Ascending aorta (tissue), 2 donors: ENCODE measurements at regions of chr13 and their contacts with region 1.

Region 1: GRCh38 chr13:80363890-80364503 is 23.1 kb upstream of the SPRY2 start:
- DNase-seq: no peak
- H3K4me3 ChIP-seq: peak overlapping the region; percentile 28 to 29
- H3K27ac ChIP-seq: no peak overlapping the region
- H3K4me1 ChIP-seq: peaks cover 0 to 12% of the 10 kb centered on the region in 2 donors
- H3K27me3 ChIP-seq: no peaks in the 10 kb centered on the region
- CTCF ChIP-seq: peak in 2 of 3 experiments; percentile 71 to 76

Region 2: GRCh38 chr13:79679334-79679733 is 684.7 kb before region 1 on chr13:
- intact Hi-C with region 1: loop called (anchors 10 kb)
- DNase-seq: peak in 1 of 2 donors; percentile 79
- H3K4me3 ChIP-seq: no peak overlapping the region
- H3K27ac ChIP-seq: no peak overlapping the region
- H3K4me1 ChIP-seq: no peaks in the 10 kb centered on the region
- H3K27me3 ChIP-seq: no peaks in the 10 kb centered on the region
- CTCF ChIP-seq: peak; percentile 65 to 74 (median 67)

Region 3: DNA sequence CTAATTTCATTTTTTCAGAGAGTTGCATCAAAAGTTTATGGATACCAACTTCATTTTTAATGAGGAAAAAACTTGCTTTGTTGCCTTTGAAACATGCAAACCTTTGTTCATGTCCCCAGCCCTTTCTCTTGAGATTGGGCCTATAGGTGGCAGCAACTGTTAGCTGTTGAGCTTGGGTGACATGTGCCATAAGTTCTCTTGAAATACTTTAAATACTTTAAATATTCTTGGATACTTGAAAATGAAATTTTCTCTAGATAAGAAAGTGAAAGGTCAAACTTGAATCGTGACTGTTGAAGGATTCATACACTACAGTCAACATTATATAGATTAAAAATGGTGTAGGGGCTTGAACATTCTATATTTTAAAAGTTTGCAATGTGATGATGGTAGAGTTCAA is 588.2 kb before region 1 on chr13:
- intact Hi-C with region 1: loop called (anchors 1 kb)
- DNase-seq: no peak
- H3K4me3 ChIP-seq: no peak overlapping the region
- H3K27ac ChIP-seq: no peak overlapping the region
- H3K4me1 ChIP-seq: peaks cover 0 to 7% of the 10 kb centered on the region in 2 donors
- H3K27me3 ChIP-seq: no peaks in the 10 kb centered on the region
- CTCF ChIP-seq: peak; percentile 22 to 69 (median 51)

Region 4: GRCh38 chr13:80399340-80400163 is 35.6 kb after region 1 on chr13:
- intact Hi-C with region 1: no loop called
- DNase-seq: no peak
- H3K4me3 ChIP-seq: no peak overlapping the region
- H3K27ac ChIP-seq: no peak overlapping the region
- H3K4me1 ChIP-seq: no peaks in the 10 kb centered on the region
- H3K27me3 ChIP-seq: no peaks in the 10 kb centered on the region
- CTCF ChIP-seq: no peak